CD8-positive, alpha-beta T cell (primary cell): ENCODE measurements at regions of chr5 and their contacts with region 1.

Region 1: GRCh38 chr5:109388407-109388806 is 21.4 kb downstream of the PJA2 start:
- DNase-seq: no peak
- ATAC-seq: no peak
- H3K4me3 ChIP-seq: no peak overlapping the region
- H3K4me3 Mint-ChIP-seq: peak overlapping the region; percentile 21
- H3K27ac ChIP-seq: no peak overlapping the region
- H3K27ac Mint-ChIP-seq: peak overlapping the region; percentile 3
- H3K4me1 ChIP-seq: peaks cover 36% of the 10 kb centered on the region
- H3K4me1 Mint-ChIP-seq: peaks cover 84% of the 10 kb centered on the region
- H3K27me3 ChIP-seq: no peaks in the 10 kb centered on the region
- H3K27me3 Mint-ChIP-seq: no peaks in the 10 kb centered on the region
- CTCF ChIP-seq: no peak

Region 2: DNA sequence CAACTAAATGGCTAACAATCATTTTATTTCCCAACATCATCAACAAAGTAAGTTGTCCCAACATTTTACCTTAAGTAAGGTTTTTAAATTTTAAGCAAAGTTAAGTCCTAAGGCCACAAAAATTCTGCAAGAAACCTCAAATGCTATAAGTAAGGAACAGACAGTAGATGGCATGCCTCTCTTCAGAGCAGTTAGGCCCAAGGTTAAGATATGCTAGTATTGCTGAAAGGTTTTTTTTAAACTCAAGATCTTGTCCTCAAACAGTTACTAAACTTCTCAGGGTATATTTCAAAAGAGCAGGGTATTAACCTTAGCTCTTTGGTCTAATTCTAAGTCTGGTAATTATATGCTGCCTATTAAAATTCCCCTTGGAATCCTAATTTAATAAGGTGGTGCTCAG is 13.8 kb before region 1 on chr5:
- CTCF ChIA-PET with region 1: no interaction called
- POLR2A ChIA-PET with region 1: no interaction called
- intact Hi-C with region 1: loop called in 1 of 2 experiments (anchors 2 kb)
- DNase-seq: peak in 2 of 9 experiments; percentile 26 to 46
- ATAC-seq: peak; percentile 44
- H3K4me3 ChIP-seq: no peak overlapping the region
- H3K4me3 Mint-ChIP-seq: no peak overlapping the region
- H3K27ac ChIP-seq: no peak overlapping the region
- H3K27ac Mint-ChIP-seq: no peak overlapping the region
- H3K4me1 ChIP-seq: peaks cover 6% of the 10 kb centered on the region
- H3K4me1 Mint-ChIP-seq: peaks cover 69% of the 10 kb centered on the region
- H3K27me3 ChIP-seq: no peaks in the 10 kb centered on the region
- H3K27me3 Mint-ChIP-seq: no peaks in the 10 kb centered on the region
- CTCF ChIP-seq: no peak

Region 3: DNA sequence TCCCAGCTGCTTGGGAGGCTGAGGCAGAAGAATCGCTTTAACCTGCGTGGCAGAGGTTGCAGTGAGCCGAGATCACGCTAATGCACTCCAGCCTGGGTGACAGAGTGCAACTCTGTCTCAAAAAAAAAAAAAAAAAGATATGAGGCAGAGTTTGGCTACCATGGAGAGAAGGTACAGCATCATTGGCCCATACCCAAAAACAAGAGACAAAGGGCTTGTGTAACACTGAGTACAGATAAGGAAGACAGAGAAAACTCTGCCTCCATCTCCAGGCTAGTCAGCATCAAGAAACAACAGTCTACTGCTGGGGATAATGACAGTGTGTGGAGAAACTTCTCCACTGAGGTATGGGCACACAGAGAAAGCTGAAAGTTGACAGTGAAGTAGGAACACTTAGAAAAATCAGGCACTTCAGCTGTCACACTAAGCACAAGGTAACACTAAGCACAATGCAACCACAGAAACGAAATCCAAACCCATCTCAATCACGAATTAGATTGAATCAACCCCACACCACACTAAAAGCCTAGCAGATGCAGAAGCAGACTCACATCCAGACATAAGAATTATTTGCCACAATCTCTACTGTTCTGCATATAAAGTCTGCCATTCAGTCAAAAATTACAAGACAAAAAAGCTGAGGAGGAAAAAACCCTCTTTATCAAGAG is 10.8 kb after region 1 on chr5:
- CTCF ChIA-PET with region 1: no interaction called
- POLR2A ChIA-PET with region 1: no interaction called
- intact Hi-C with region 1: loop called in 1 of 2 experiments (anchors 1 kb)
- DNase-seq: no peak
- ATAC-seq: no peak
- H3K4me3 ChIP-seq: no peak overlapping the region
- H3K4me3 Mint-ChIP-seq: peak overlapping the region; percentile 46
- H3K27ac ChIP-seq: no peak overlapping the region
- H3K27ac Mint-ChIP-seq: peak overlapping the region; percentile 64
- H3K4me1 ChIP-seq: peaks cover 55% of the 10 kb centered on the region
- H3K4me1 Mint-ChIP-seq: peaks cover 82% of the 10 kb centered on the region
- H3K27me3 ChIP-seq: no peaks in the 10 kb centered on the region
- H3K27me3 Mint-ChIP-seq: no peaks in the 10 kb centered on the region
- CTCF ChIP-seq: no peak